Ovary (tissue), 10 donors: ENCODE measurements at regions of chr15 and their contacts with region 1.

Region 1: DNA sequence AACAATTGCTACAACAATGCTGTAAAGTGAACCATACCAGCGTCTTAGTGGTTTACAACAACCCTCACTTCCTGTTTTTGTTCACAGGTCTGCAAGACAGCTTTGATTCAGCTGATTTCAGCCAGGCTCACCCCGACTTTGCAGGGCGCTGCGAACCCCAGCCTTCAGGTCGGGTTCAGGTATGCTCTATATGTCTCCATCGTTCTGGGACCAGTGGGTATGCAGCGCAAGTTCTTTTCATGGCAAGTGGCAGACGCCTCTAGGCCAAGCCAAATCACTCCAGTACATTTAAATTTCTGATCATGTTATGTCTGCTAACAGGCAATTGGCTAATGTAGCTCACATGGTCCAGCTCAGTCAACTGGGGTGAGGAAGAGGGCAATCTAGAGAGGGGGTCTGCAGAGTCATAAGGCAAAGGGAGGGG is 52.4 kb upstream of the RGMA start:
- DNase-seq: no peak
- H3K4me3 ChIP-seq: no peak overlapping the region
- H3K27ac ChIP-seq: no peak overlapping the region
- H3K4me1 ChIP-seq: no peaks in the 10 kb centered on the region
- H3K27me3 ChIP-seq: no peaks in the 10 kb centered on the region
- CTCF ChIP-seq: no peak
- EP300 ChIP-seq: no peak
- POLR2A ChIP-seq: no peak

Region 2: DNA sequence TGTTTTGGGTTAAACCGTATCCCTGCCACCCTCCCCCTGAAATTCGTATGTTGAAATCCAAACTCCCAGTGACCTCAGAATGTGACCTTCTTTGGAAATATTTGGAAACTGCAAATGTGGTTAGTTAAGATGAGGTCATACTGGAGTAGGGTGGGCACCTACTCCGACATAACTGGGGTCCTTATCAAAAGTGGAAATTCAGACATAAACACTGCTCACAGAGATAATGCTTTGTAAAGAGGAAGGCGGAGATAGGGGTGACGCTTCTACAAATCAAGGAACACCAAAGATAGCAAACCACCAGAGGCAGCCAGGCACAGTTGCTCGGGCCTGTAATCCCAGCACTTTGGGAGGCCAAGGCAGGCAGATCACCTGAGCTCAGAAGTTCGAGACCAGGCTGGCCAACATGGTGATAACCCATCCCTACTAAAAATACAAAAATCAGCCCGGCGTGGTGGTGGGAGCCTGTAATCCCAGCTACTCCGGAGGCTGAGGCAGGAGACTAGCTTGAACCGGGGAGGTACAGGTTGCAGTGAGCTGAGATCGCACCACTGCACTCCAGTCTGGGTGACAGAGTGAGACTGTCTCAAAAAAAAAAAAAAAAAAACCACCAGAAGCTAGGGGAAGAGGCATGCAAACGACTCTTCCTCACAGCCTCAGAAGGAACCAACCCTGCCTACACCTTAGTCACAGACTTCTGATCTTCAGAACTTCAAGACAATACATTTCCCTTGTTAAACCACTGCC is 292.4 kb before region 1 on chr15:
- intact Hi-C with region 1: no loop called
- DNase-seq: no peak
- H3K4me3 ChIP-seq: no peak overlapping the region
- H3K27ac ChIP-seq: no peak overlapping the region
- H3K4me1 ChIP-seq: peaks cover 7% of the 10 kb centered on the region
- H3K27me3 ChIP-seq: no peaks in the 10 kb centered on the region
- CTCF ChIP-seq: no peak
- EP300 ChIP-seq: no peak
- POLR2A ChIP-seq: no peak

Region 3: GRCh38 chr15:92992720-92993119 is 148.7 kb before region 1 on chr15:
- intact Hi-C with region 1: no loop called
- DNase-seq: no peak
- H3K4me3 ChIP-seq: no peak overlapping the region
- H3K27ac ChIP-seq: no peak overlapping the region
- H3K4me1 ChIP-seq: no peaks in the 10 kb centered on the region
- H3K27me3 ChIP-seq: no peaks in the 10 kb centered on the region
- CTCF ChIP-seq: no peak
- EP300 ChIP-seq: no peak
- POLR2A ChIP-seq: no peak

Region 4: GRCh38 chr15:93780073-93780472 is 638.7 kb after region 1 on chr15:
- intact Hi-C with region 1: loop called in 1 of 4 experiments (anchors 5 kb)
- DNase-seq: no peak
- H3K4me3 ChIP-seq: no peak overlapping the region
- H3K27ac ChIP-seq: no peak overlapping the region
- H3K4me1 ChIP-seq: no peaks in the 10 kb centered on the region
- H3K27me3 ChIP-seq: no peaks in the 10 kb centered on the region
- CTCF ChIP-seq: no peak
- EP300 ChIP-seq: no peak
- POLR2A ChIP-seq: no peak